ENCODE measurements at regions of chr20 and their contacts with region 1.

Region 1: GRCh38 chr20:52312132-52312729 is 120.7 kb upstream of the ZFP64 start:
- DNase-seq: peak; percentile 7
- ATAC-seq: peak; percentile 74
- H3K4me3 ChIP-seq: no peak overlapping the region
- H3K27ac ChIP-seq: no peak overlapping the region
- H3K4me1 ChIP-seq: no peaks in the 10 kb centered on the region
- H3K27me3 ChIP-seq: no peaks in the 10 kb centered on the region
- CTCF ChIP-seq: peak; percentile 68 to 75 (median 69)
- EP300 ChIP-seq: no peak
- POLR2A ChIP-seq: no peak
- RAD21 ChIP-seq: peak; percentile 76

Region 2: GRCh38 chr20:52289956-52290565 is 22.2 kb before region 1 on chr20:
- CTCF ChIA-PET with region 1: interaction called, 11 read pairs
- POLR2A ChIA-PET with region 1: no interaction called
- RAD21 ChIA-PET with region 1: no interaction called
- SMC1A ChIA-PET with region 1: no interaction called
- in situ Hi-C with region 1: no loop called
- intact Hi-C with region 1: no loop called
- DNase-seq: no peak
- ATAC-seq: no peak
- H3K4me3 ChIP-seq: no peak overlapping the region
- H3K27ac ChIP-seq: no peak overlapping the region
- H3K4me1 ChIP-seq: no peaks in the 10 kb centered on the region
- H3K27me3 ChIP-seq: peaks cover 0 to 1% of the 10 kb centered on the region in 2 experiments; a peak in 1 of 4 replicates
- CTCF ChIP-seq: no peak
- EP300 ChIP-seq: no peak
- POLR2A ChIP-seq: no peak
- RAD21 ChIP-seq: no peak

Region 3: DNA sequence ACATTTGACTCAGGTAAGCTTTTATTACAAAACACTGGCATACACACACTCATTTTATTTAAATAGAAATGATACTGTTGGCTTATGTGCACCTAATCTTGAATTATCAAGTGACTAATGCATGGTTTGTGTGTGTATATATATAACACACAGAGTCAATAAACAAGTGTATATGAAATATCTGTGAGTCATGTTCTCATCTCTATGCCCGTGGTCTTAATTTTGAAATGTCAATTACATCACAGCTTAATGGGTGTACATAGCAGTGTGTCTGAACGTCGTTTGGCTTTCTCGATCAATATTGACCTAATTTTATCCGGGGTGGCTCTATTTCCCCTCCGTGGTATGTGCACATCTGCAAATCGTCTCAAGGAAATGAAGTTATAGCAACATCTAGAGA is 16.7 kb before region 1 on chr20:
- CTCF ChIA-PET with region 1: interaction called, 12 read pairs
- POLR2A ChIA-PET with region 1: no interaction called
- RAD21 ChIA-PET with region 1: no interaction called
- SMC1A ChIA-PET with region 1: interaction called, 6 read pairs
- in situ Hi-C with region 1: no loop called
- intact Hi-C with region 1: no loop called
- DNase-seq: no peak
- ATAC-seq: no peak
- H3K4me3 ChIP-seq: no peak overlapping the region
- H3K27ac ChIP-seq: no peak overlapping the region
- H3K4me1 ChIP-seq: no peaks in the 10 kb centered on the region
- H3K27me3 ChIP-seq: peaks cover 0 to 1% of the 10 kb centered on the region in 2 experiments; a peak in 1 of 4 replicates
- CTCF ChIP-seq: no peak
- EP300 ChIP-seq: no peak
- POLR2A ChIP-seq: no peak
- RAD21 ChIP-seq: no peak

Region 4: GRCh38 chr20:52379723-52380336 is 67.6 kb after region 1 on chr20:
- CTCF ChIA-PET with region 1: interaction called, 28 read pairs
- POLR2A ChIA-PET with region 1: interaction called, 3 read pairs
- RAD21 ChIA-PET with region 1: interaction called, 9 read pairs
- SMC1A ChIA-PET with region 1: interaction called, 3 read pairs
- in situ Hi-C with region 1: no loop called
- intact Hi-C with region 1: loop called (anchors 2 kb)
- DNase-seq: no peak
- ATAC-seq: no peak
- H3K4me3 ChIP-seq: no peak overlapping the region
- H3K27ac ChIP-seq: no peak overlapping the region
- H3K4me1 ChIP-seq: no peaks in the 10 kb centered on the region
- H3K27me3 ChIP-seq: no peaks in the 10 kb centered on the region
- CTCF ChIP-seq: peak; percentile 82 to 92 (median 90)
- EP300 ChIP-seq: no peak
- POLR2A ChIP-seq: no peak
- RAD21 ChIP-seq: peak; percentile 65

Region 5: DNA sequence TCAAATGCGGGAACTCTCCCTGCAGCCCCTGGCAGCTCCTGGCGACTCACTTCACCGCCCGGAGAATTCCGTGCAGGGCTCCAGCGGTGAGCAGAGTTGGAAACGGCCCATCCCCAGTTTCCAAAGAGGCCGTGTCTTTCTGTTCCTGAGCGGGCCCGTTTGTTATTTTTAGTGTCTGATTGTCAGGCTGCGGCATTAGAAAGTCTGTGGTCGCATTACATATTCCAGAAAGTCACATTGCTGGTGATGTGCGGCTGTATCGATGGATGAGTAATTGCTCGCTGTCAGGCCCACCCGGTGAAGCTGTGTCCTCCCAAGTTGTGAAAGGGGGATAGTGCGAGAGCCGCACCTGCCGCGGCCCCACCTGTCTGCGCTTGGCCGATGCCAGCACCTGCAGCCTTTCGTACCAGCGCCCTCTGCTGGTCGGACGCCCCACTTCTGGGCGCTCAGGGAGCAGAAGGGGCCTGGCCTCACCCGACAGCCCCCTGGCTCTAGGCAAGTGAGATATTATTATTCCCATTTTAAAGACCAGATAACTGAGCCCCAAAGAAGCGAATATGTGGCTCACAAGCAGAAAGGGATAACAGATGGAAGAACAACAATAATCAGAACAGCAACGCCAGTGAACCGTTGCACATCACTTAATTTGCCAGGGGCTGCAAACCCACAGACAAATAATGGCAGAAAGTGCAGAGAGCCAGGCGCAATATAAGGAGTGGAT is 904.8 kb after region 1 on chr20:
- CTCF ChIA-PET with region 1: interaction called, 12 read pairs
- POLR2A ChIA-PET with region 1: no interaction called
- RAD21 ChIA-PET with region 1: interaction called, 3 read pairs
- SMC1A ChIA-PET with region 1: interaction called, 8 read pairs
- in situ Hi-C with region 1: loop called (anchors 10 kb)
- intact Hi-C with region 1: loop called (anchors 2 kb)
- DNase-seq: no peak
- ATAC-seq: peak; percentile 97
- H3K4me3 ChIP-seq: no peak overlapping the region
- H3K27ac ChIP-seq: no peak overlapping the region
- H3K4me1 ChIP-seq: no peaks in the 10 kb centered on the region
- H3K27me3 ChIP-seq: no peaks in the 10 kb centered on the region
- CTCF ChIP-seq: peak; percentile 81 to 93 (median 83)
- EP300 ChIP-seq: no peak
- POLR2A ChIP-seq: no peak
- RAD21 ChIP-seq: peak; percentile 84

Region 6: DNA sequence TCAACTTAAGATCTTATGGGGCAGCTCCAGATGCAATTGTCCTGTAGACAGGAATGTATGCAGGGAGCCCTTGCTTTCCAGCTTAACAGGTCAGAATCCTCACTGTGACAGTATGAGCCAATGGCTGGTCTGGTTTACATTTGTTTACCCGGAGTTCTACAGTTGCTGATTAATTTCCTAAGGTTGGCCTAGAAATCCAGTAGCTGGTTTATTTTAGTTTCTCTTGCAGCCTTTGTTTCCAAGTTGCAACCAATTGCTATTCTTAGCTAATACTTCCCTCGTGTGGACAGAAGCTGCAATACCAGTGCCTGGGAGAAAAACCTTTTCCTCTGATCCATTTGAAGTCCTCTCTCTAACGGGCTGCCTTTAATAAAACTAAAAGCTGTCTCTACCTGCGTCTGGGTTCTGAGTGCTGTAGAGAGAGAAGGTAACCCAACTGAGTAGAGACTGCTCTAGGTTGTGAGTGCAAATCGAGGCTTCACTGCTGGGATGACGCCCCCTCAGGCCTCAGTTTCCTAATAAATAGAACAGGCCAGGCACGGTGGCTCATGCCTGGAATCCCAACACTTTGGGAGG is 1235.5 kb after region 1 on chr20:
- CTCF ChIA-PET with region 1: no interaction called
- POLR2A ChIA-PET with region 1: no interaction called
- RAD21 ChIA-PET with region 1: interaction called, 10 read pairs
- SMC1A ChIA-PET with region 1: interaction called, 7 read pairs
- in situ Hi-C with region 1: no loop called
- intact Hi-C with region 1: no loop called
- DNase-seq: peak; percentile 21
- ATAC-seq: peak; percentile 70
- H3K4me3 ChIP-seq: no peak overlapping the region
- H3K27ac ChIP-seq: no peak overlapping the region
- H3K4me1 ChIP-seq: no peaks in the 10 kb centered on the region
- H3K27me3 ChIP-seq: no peaks in the 10 kb centered on the region
- CTCF ChIP-seq: peak; percentile 65 to 78 (median 65)
- EP300 ChIP-seq: no peak
- POLR2A ChIP-seq: no peak
- RAD21 ChIP-seq: peak; percentile 92